ENCODE measurements at regions of chr11 and their contacts with region 1.

Region 1: DNA sequence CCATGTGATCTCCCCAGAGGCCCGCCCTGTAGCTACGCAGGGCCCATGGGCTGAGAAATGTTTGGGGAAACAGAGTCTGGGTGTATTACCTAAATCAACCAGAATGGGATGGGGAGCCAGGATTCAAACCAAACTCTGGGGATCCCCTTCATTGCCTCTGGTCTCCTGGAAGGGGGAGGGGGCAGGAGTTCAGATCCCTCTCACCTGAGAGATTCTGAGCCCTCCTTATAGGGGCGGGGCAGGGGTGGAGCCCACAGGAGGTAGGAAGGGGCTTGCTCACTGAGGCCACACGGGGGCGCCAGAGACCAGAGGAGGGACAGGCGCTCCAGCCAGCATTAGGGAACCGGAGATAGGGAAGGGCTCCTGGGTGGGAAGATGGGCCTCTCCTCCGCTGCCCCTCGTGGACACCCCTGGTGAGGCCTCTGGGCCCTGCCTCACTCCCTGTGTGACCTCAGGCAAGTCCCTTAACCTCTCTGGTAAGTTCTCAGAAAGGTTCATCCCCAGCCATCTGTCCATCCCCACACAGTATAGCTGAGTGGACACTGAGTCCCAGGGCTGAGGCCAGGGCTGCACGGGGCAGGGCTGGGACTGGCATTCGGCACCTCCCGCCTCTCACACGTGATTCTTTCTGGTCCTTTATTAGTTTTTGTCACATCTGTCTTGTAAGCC is 2.7 kb upstream of the CDC42BPG start:
- DNase-seq: peak; percentile 91 to 96 (median 92)
- ATAC-seq: peak; percentile 84
- H3K4me3 ChIP-seq: no peak overlapping the region
- H3K27ac ChIP-seq: no peak overlapping the region; the same call in 2 of the 3 replicates
- H3K4me1 ChIP-seq: peaks cover 54 to 82% of the 10 kb centered on the region in 2 experiments
- H3K27me3 ChIP-seq: no peaks in the 10 kb centered on the region; a peak in 1 of 5 replicates
- CTCF ChIP-seq: peak; percentile 94 to 99 (median 98)
- EP300 ChIP-seq: no peak
- POLR2A ChIP-seq: no peak
- RAD21 ChIP-seq: peak; percentile 98 to 99

Region 2: GRCh38 chr11:64787526-64788320 is 59.4 kb before region 1 on chr11:
- CTCF ChIA-PET with region 1: interaction called, 9 read pairs
- POLR2A ChIA-PET with region 1: no interaction called
- in situ Hi-C with region 1: no loop called
- intact Hi-C with region 1: loop called (anchors 1 kb)
- DNase-seq: peak; percentile 71 to 85 (median 77)
- ATAC-seq: peak; percentile 98
- H3K4me3 ChIP-seq: no peak overlapping the region
- H3K27ac ChIP-seq: no peak overlapping the region
- H3K4me1 ChIP-seq: peaks cover 3 to 17% of the 10 kb centered on the region in 2 experiments; a peak in 4 of 5 replicates
- H3K27me3 ChIP-seq: no peaks in the 10 kb centered on the region
- CTCF ChIP-seq: peak; percentile 85 to 92 (median 91)
- EP300 ChIP-seq: no peak
- POLR2A ChIP-seq: no peak
- RAD21 ChIP-seq: peak; percentile 60 to 80

Region 3: DNA sequence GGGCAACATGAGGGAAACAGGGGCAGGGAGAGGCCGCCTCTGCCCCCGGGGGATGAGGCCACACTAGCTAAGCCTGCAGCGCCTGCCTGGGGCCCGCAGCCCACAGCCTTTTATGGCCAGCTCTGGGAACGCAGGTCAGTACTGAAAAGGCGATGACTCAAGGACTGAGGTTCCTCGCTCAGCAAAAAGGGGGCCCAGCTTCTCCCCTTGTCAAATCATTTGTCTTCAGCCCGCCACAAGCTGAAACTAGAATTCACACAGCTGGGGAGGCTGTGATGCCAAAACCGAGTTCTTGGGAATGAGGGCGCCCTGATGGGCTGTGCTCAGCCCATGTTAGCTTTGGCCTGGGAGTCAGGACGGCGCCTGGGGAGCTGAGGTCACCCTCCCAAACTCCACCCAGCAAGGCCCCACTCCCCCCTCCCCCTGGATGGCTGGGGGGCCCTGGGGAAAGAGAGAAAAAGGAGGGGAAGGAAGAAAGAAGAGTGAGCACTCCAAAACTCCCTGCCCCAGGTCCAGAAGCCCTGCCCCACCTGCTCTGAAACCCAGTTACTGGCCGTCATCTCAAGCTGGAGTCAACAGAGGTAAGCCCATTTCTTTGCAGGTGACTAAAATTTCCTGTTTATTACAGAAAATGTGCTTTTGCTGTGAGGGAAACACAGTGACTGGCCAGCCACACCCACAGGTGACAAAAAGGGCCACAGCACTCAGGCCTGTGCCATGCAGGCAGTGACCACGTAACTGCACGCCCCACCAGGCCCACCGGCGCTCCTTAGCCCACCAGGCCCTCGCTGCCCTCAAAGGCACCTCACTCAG is 17.5 kb after region 1 on chr11:
- CTCF ChIA-PET with region 1: no interaction called
- POLR2A ChIA-PET with region 1: interaction called, 11 read pairs
- in situ Hi-C with region 1: no loop called
- intact Hi-C with region 1: no loop called
- DNase-seq: peak in 2 of 4 experiments; percentile 31 to 34
- ATAC-seq: peak; percentile 54
- H3K4me3 ChIP-seq: no peak overlapping the region
- H3K27ac ChIP-seq: peak overlapping the region; percentile 39; the same call in 2 of the 3 replicates
- H3K4me1 ChIP-seq: peaks cover 21 to 52% of the 10 kb centered on the region in 2 experiments
- H3K27me3 ChIP-seq: no peaks in the 10 kb centered on the region
- CTCF ChIP-seq: no peak
- EP300 ChIP-seq: no peak
- POLR2A ChIP-seq: no peak
- RAD21 ChIP-seq: no peak

Region 4: GRCh38 chr11:64887757-64888405 is 40.7 kb after region 1 on chr11:
- CTCF ChIA-PET with region 1: interaction called, 39 read pairs
- POLR2A ChIA-PET with region 1: interaction called, 12 read pairs
- in situ Hi-C with region 1: loop called (anchors 5 kb)
- intact Hi-C with region 1: loop called (anchors 1 kb)
- DNase-seq: peak; percentile 90 to 92 (median 92)
- ATAC-seq: peak; percentile 83
- H3K4me3 ChIP-seq: peak overlapping the region; percentile 8; the same call in 1 of the 2 replicates
- H3K27ac ChIP-seq: peak overlapping the region; percentile 82
- H3K4me1 ChIP-seq: peaks cover 44 to 80% of the 10 kb centered on the region in 2 experiments
- H3K27me3 ChIP-seq: no peaks in the 10 kb centered on the region
- CTCF ChIP-seq: peak; percentile 92 to 93 (median 92)
- EP300 ChIP-seq: no peak; the same call in 1 of the 2 replicates
- POLR2A ChIP-seq: peak; percentile 66
- RAD21 ChIP-seq: peak; percentile 41 to 55; a peak in 3 of 4 replicates

Region 5: DNA sequence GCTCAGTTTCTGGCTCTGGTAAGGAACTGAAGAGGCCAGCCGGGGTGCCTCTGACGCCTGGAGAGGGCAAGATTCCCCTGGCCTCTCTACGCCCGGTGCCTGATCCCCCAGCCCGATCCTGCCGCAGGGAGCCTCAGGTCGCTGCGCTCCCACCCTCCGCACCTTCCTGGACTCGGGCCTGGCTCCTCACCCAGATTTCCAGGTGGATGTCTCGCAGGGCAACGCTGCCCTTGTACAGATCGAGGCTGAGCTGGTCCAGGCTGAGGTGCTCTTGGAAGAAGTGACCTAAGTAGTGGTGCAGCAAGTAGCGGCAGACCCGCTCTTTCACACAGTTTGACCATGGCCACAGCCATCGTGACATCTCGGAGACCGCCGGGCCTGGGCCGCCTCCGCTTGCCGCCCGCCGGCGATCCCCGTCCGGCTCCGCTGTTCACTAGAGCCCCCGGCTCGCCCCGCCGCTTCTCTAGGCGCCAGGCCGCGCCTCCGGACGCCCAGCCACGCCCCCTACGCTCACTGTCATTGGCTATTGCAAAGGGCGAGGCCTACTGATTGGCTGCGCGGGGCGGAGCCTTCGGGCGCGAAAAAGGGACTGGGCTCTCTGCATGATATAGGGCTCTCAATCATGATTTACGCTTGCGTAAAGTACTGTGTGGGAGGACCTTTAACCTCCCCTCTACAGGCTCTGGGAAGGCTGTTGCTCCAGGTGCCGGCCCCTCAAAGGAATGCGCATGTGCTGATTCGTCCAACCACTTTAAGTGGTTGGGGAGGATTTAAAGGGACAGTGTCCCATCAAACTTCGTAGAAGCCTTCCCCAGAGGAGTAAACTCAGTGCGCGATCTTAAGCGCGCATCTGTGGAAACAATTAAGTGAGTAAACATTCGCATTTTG is 69.9 kb after region 1 on chr11 and contains the start of gene ATG2A:
- CTCF ChIA-PET with region 1: no interaction called
- POLR2A ChIA-PET with region 1: no interaction called
- in situ Hi-C with region 1: no loop called
- intact Hi-C with region 1: no loop called
- DNase-seq: peak; percentile 93 to 99 (median 95)
- ATAC-seq: peak; percentile 96
- H3K4me3 ChIP-seq: peak within 1 kb of the TSS; percentile 87
- H3K27ac ChIP-seq: peak within 1 kb of the TSS; percentile 87
- H3K4me1 ChIP-seq: peaks cover 20 to 47% of the 10 kb centered on the region in 2 experiments; a peak in 4 of 5 replicates
- H3K27me3 ChIP-seq: no peaks in the 10 kb centered on the region
- CTCF ChIP-seq: no peak
- EP300 ChIP-seq: no peak
- POLR2A ChIP-seq: peak; percentile 86
- RAD21 ChIP-seq: no peak
- polyA plus RNA-seq, gene ATG2A: 0.25 to 0.53 TPM

Region 6: DNA sequence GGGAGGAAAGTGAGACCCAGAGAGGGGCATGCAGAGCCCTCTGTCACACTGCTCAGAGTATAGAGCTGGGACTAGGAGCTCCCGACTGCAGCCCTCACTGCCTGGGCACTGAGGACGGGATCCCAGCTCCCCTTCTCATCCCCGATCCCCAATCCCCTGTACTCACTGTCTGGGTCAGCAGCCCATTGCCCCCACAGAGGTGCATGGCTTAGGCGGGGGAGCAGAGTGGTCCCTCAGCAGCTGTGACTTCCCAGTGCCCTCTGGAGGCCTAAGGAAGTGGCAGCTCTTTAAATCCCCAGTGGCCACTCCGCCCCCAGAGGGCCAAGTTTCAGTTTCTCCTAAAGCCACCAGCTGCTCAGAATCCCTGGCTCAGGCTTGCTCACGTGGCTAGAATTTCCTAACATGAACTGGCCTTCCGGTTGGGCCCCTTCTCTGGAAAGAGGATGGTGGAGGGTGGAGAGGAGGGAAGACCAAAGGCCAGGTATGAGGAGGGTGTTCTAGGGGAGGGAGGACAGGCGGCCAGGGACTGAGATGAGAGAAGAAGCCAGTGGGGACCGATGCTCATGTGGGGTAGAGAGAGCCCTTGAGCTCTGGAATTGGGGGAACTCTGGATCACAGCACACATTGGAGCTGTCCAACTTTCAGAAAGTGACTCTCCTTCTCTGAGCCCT is 149.7 kb after region 1 on chr11 and contains the start of gene BATF2:
- CTCF ChIA-PET with region 1: interaction called, 4 read pairs
- POLR2A ChIA-PET with region 1: no interaction called
- in situ Hi-C with region 1: loop called (anchors 5 kb)
- intact Hi-C with region 1: loop called (anchors 1 kb)
- DNase-seq: peak; percentile 86 to 91 (median 88)
- ATAC-seq: peak; percentile 91
- H3K4me3 ChIP-seq: peak within 1 kb of the TSS; percentile 33
- H3K27ac ChIP-seq: peak within 1 kb of the TSS; percentile 52
- H3K4me1 ChIP-seq: peaks cover 23% of the 10 kb centered on the region in 2 experiments; a peak in 4 of 5 replicates
- H3K27me3 ChIP-seq: no peaks in the 10 kb centered on the region
- CTCF ChIP-seq: peak; percentile 80 to 97 (median 97)
- EP300 ChIP-seq: peak; percentile 12; the same call in 1 of the 2 replicates
- POLR2A ChIP-seq: peak; percentile 62
- RAD21 ChIP-seq: peak; percentile 88
- polyA plus RNA-seq, gene BATF2: 1.7 to 1.9 TPM

Region 7: GRCh38 chr11:65111744-65112414 is 264.7 kb after region 1 on chr11 and contains the start of gene TM7SF2:
- CTCF ChIA-PET with region 1: no interaction called
- POLR2A ChIA-PET with region 1: no interaction called
- in situ Hi-C with region 1: no loop called
- intact Hi-C with region 1: loop called (anchors 5 kb)
- DNase-seq: peak; percentile 96 to 99 (median 98)
- ATAC-seq: peak; percentile 90
- H3K4me3 ChIP-seq: peak within 1 kb of the TSS; percentile 44
- H3K27ac ChIP-seq: peak within 1 kb of the TSS; percentile 79
- H3K4me1 ChIP-seq: peaks cover 29 to 62% of the 10 kb centered on the region in 2 experiments
- H3K27me3 ChIP-seq: no peaks in the 10 kb centered on the region
- CTCF ChIP-seq: 0 out of 6 replicates have a peak, but pooled peaks of 1 of the 3 experiments have one; percentile 0
- EP300 ChIP-seq: no peak
- POLR2A ChIP-seq: peak; percentile 88
- RAD21 ChIP-seq: no peak
- polyA plus RNA-seq, gene TM7SF2: 1.2 to 1.4 TPM